Activated T-helper 1 cell treated with anti-CD3 and anti-CD28 coated beads, Interleukin-12 subunit alpha, Interleukin-12 subunit beta, Interleukin-2, Interleukin-4 antibody, amounts not matched to agents 30 ng/mL and 10 ng/mL and 1 ng/mL, durations not matched to agents 14 hours and 24 hours and 36 hours (primary cell): ENCODE measurements at regions of chr3 and their contacts with region 1.

Region 1: DNA sequence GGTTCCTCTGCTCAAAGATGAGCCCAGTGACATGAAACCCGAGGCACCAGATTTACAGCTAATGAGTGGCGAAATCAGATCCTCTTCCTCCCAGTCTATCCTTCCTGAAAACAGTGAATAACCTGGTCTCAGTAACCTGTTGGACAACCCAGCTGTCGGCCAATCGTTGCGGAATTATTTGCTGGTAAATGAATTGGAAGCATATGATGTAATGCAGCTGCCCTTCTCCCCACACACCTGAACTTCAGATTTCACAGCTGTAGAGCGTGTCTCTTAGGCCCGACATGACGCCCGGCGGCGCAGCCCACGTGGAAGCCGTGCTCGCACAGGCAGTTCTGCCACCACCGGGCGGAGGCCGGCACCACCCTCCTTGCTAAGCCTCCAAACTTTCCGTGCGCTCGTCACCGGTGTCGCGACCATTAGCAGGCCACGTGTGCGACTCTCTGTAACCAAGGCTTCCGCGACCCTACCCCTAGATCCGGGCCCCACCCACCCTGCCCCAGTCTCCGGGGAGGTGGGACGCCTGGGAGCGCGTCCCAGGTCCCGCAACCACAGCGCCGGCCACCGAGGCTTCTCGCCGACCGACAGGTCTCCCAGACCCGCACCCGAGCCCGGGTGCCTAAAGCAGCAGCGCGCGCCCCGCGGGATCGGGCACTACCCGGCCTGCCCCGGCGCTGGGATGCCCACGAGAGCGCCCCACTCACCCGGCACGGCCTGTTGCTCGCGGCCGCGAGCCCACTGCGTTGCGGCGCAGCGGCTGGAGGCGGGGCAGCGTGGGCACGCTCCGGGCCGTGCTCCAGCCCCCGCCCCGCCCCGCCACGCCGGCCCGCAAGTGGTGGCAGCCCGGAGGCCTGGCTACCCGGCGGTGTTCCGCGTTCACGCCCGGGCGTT is at the start of gene RIOX2:
- DNase-seq: peak; percentile 77
- H3K4me3 Mint-ChIP-seq: peak within 1 kb of the TSS; percentile 97
- H3K27ac Mint-ChIP-seq: peak within 1 kb of the TSS; percentile 99
- H3K4me1 Mint-ChIP-seq: peaks cover 92% of the 10 kb centered on the region
- H3K27me3 Mint-ChIP-seq: no peaks in the 10 kb centered on the region
- total RNA-seq, gene RIOX2: 85.4 and 90.9 TPM in 2 replicates

Region 2: DNA sequence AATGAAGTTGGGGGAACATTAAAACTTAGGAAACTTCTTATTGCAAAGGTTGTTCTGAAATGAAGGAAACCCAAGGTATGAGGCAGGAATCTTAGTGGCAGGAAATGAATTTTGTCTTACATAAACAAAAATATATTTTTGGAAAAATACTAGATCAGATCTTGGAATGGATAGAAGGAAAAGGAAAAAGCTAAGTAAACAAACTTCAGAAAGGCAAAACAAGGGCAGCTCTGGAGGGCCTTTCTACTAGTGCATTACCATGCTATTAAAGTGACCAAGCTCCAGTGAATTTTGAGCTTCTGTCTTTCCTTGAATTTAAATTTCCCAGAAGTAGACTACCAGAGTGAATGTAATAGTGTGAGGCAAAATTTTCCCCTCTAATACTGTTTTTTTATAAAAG is 193.8 kb before region 1 on chr3:
- intact Hi-C with region 1: no loop called
- DNase-seq: no peak
- H3K4me3 Mint-ChIP-seq: no peak overlapping the region
- H3K27ac Mint-ChIP-seq: no peak overlapping the region
- H3K4me1 Mint-ChIP-seq: no peaks in the 10 kb centered on the region
- H3K27me3 Mint-ChIP-seq: peaks cover 5% of the 10 kb centered on the region

Region 3: GRCh38 chr3:97793420-97794019 is 178.4 kb before region 1 on chr3:
- intact Hi-C with region 1: loop called (anchors 1 kb)
- DNase-seq: peak; percentile 6
- H3K4me3 Mint-ChIP-seq: no peak overlapping the region
- H3K27ac Mint-ChIP-seq: no peak overlapping the region
- H3K4me1 Mint-ChIP-seq: no peaks in the 10 kb centered on the region
- H3K27me3 Mint-ChIP-seq: no peaks in the 10 kb centered on the region

Region 4: GRCh38 chr3:97950360-97950759 is 21.6 kb before region 1 on chr3:
- intact Hi-C with region 1: loop called (anchors 2 kb)
- DNase-seq: no peak
- H3K4me3 Mint-ChIP-seq: no peak overlapping the region
- H3K27ac Mint-ChIP-seq: no peak overlapping the region
- H3K4me1 Mint-ChIP-seq: peaks cover 30% of the 10 kb centered on the region
- H3K27me3 Mint-ChIP-seq: no peaks in the 10 kb centered on the region

Region 5: DNA sequence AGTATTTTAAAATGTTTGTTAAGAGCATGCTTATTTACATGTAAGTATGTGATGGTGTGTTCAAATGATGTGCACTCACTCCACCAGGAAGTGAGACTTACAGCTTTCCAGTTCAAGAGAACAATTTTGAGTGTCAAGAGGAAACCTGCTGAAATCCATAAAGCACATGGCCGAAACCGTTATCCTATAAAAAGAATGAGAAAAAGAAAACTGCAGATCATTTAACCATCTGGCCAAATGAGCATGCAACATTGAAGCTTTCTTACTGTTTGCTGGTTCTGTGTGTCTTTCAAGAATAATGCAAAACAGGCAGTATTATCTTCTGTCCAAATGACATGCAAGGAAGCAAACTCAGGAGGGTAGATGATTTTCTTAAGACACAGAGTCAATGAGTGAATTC is 36.9 kb after region 1 on chr3:
- intact Hi-C with region 1: loop called (anchors 5 kb)
- DNase-seq: no peak
- H3K4me3 Mint-ChIP-seq: no peak overlapping the region
- H3K27ac Mint-ChIP-seq: peak overlapping the region; percentile 59
- H3K4me1 Mint-ChIP-seq: peaks cover 60% of the 10 kb centered on the region
- H3K27me3 Mint-ChIP-seq: no peaks in the 10 kb centered on the region